Heart right ventricle (tissue), 16 donors: ENCODE measurements at regions of chr1 and their contacts with region 1.

Region 1: DNA sequence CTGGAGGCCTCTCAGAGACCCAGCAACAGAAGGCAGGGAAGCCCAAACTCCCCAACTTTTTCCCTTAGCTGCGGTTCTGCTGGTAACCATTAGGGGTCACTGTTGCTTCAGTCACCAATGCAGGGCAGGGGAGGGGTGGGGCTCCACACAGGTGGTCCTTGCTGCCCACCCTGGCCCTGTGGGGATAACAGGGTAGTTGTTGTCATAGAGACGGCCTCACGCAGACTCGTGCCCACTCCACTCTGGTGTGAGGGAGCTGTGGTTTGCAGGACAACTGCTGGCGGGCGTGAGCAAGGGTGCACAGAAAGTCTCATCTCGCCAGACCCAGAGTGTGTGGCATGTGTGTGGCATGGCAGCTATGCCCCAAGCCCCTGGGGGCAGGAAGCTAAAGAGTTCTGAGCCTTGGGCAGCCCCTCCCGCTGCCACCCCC is 19.9 kb downstream of the INSRR start:
- DNase-seq: no peak
- ATAC-seq: peak; percentile 28 to 67 (median 49)
- H3K4me3 ChIP-seq: no peak overlapping the region
- H3K27ac ChIP-seq: no peak overlapping the region
- H3K4me1 ChIP-seq: peaks cover 0 to 5% (median 0%) of the 10 kb centered on the region in 9 donors
- H3K27me3 ChIP-seq: peaks cover 0 to 67% (median 45%) of the 10 kb centered on the region in 7 donors
- CTCF ChIP-seq: peak; percentile 68 to 90 (median 84)

Region 2: DNA sequence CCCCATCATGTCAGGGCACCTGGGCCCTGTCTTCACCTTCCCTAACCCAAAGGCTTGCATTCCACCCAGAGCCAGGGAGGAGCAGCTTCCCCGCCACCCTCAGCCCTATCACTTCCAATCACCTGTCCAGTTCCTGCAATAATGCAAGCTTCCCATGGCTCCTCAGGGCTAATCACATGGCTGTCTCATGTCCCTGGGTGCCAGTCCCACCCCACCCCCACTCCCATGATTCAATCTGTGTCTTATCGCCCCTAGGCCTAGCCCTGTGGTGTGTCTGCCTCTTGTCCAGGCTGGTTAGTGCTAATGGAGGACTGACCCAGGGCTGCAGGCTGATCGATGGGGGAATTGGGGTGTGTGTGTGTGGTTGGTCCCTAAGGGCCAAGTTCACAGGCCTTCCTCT is 43.5 kb after region 1 on chr1:
- intact Hi-C with region 1: loop called in 3 of 10 experiments (anchors 2 to 10 kb)
- DNase-seq: no peak
- ATAC-seq: no peak
- H3K4me3 ChIP-seq: no peak overlapping the region
- H3K27ac ChIP-seq: no peak overlapping the region
- H3K4me1 ChIP-seq: peaks cover 0 to 17% (median 3%) of the 10 kb centered on the region in 9 donors
- H3K27me3 ChIP-seq: peaks cover 0 to 26% (median 6%) of the 10 kb centered on the region in 7 donors
- CTCF ChIP-seq: no peak